Activated naive CD4-positive, alpha-beta T cell treated with anti-CD3 and anti-CD28 coated beads, Interleukin-2, amount 10 ng/mL, durations not matched to agents 7 days and 5 days (primary cell): ENCODE measurements at regions of chr9 and their contacts with region 1.

Region 1: GRCh38 chr9:36166101-36166927 is 2.9 kb upstream of the CCIN start:
- DNase-seq: peak; percentile 85
- H3K4me3 Mint-ChIP-seq: peak overlapping the region; percentile 68
- H3K27ac Mint-ChIP-seq: no peak overlapping the region
- H3K4me1 Mint-ChIP-seq: peaks cover 20% of the 10 kb centered on the region
- H3K27me3 Mint-ChIP-seq: peaks cover 61% of the 10 kb centered on the region

Region 2: GRCh38 chr9:36008774-36009300 is 157.5 kb before region 1 on chr9:
- CTCF ChIA-PET with region 1: interaction called, 15 read pairs
- DNase-seq: peak; percentile 74
- H3K4me3 Mint-ChIP-seq: no peak overlapping the region
- H3K27ac Mint-ChIP-seq: no peak overlapping the region
- H3K4me1 Mint-ChIP-seq: peaks cover 17% of the 10 kb centered on the region
- H3K27me3 Mint-ChIP-seq: peaks cover 50% of the 10 kb centered on the region

Region 3: GRCh38 chr9:36102742-36103495 is 63.4 kb before region 1 on chr9:
- CTCF ChIA-PET with region 1: interaction called, 221 read pairs
- DNase-seq: peak; percentile 93
- H3K4me3 Mint-ChIP-seq: no peak overlapping the region
- H3K27ac Mint-ChIP-seq: no peak overlapping the region
- H3K4me1 Mint-ChIP-seq: peaks cover 9% of the 10 kb centered on the region
- H3K27me3 Mint-ChIP-seq: no peaks in the 10 kb centered on the region

Region 4: GRCh38 chr9:36110434-36110833 is 55.9 kb before region 1 on chr9:
- CTCF ChIA-PET with region 1: interaction called, 221 read pairs
- DNase-seq: no peak
- H3K4me3 Mint-ChIP-seq: no peak overlapping the region
- H3K27ac Mint-ChIP-seq: no peak overlapping the region
- H3K4me1 Mint-ChIP-seq: no peaks in the 10 kb centered on the region
- H3K27me3 Mint-ChIP-seq: no peaks in the 10 kb centered on the region

Region 5: DNA sequence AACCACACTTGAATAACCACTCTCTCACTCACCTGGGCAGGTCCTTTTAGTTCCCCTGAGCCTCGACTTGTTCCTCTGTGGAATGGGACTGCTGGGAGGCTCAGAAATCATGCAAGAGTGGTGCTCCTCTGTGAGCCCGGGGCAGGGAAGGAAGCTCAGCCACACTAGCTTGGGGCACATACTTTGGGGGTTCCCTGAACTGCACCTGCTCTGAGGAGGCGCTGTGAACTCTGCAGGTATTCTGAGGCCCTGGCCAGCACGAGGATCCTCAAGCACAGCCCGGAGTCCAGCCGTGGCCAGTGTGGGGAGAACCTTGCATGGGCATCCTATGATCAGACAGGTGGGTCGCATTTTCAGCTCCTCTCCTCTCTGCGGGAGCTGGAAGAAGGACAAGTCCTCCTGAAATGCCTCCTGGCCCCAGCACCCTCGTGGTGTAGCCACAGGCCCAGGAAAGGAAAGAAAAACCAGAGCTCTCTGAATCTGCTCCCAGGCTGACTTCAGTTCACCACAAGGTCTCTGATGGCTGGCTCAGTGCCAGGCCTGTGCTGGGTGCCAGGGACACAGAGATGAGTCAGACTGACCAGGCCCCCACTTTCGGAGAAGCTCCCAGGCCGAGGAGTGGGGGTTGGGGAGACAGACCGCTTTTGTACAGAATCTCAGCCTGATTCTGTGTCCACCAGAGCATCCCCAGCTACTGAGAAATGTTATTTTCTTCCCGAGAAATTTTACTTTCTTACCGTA is 17.8 kb before region 1 on chr9:
- CTCF ChIA-PET with region 1: interaction called, 10 read pairs
- DNase-seq: peak; percentile 67
- H3K4me3 Mint-ChIP-seq: no peak overlapping the region
- H3K27ac Mint-ChIP-seq: peak overlapping the region; percentile 74
- H3K4me1 Mint-ChIP-seq: peaks cover 94% of the 10 kb centered on the region
- H3K27me3 Mint-ChIP-seq: no peaks in the 10 kb centered on the region